ENCODE measurements at regions of chr12 and their contacts with region 1.

Region 1: DNA sequence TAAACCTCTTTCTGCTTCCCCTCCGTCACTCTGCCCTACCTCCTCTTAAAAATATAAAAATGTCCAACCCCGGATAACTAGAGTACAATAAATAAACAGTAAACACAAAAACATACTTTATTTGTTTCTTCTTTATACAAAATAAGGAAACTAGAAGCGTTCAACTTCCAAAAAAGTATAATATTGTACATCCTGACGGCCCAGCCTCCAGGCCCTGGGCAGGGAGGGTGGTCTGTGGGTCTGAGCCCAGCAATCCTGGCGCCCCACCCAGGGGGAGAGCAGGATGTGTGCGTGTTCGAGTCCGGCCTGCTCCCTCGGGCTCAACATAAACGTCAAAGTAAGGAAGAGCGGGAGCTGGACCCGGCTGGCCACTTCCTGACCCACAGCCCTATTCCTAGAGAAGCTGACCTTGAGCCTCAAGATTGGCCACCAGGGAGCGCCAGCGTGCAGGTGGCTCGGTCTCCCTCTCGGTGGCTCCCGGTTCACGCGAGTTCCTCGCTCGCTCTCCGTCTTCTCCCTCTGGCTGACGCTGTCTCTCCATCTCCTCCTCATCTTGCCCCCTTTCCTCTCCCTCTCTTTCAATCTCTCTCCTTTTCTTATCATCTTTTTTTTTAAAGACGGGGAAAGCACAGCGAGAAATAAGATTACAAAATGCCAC is 9.4 kb downstream of the LHX5 start:
- DNase-seq: peak; percentile 80
- H3K4me3 Mint-ChIP-seq: peak overlapping the region; percentile 70
- H3K27ac Mint-ChIP-seq: no peak overlapping the region
- H3K4me1 Mint-ChIP-seq: peaks cover 28% of the 10 kb centered on the region
- H3K27me3 Mint-ChIP-seq: peaks cover 53% of the 10 kb centered on the region

Region 2: GRCh38 chr12:113479590-113480335 is 17.5 kb after region 1 on chr12:
- CTCF ChIA-PET with region 1: interaction called, 7 read pairs
- POLR2A ChIA-PET with region 1: no interaction called
- intact Hi-C with region 1: loop called (anchors 2 kb)
- DNase-seq: peak; percentile 44
- H3K4me3 Mint-ChIP-seq: no peak overlapping the region
- H3K27ac Mint-ChIP-seq: peak overlapping the region; percentile 8
- H3K4me1 Mint-ChIP-seq: peaks cover 4% of the 10 kb centered on the region
- H3K27me3 Mint-ChIP-seq: peaks cover 74% of the 10 kb centered on the region

Measured in activated CD4-positive, alpha-beta memory T cell treated with anti-CD3 and anti-CD28 coated beads for 36 hours (primary cell).